SK-N-SH (cell line): ENCODE measurements at regions of chr3 and their contacts with region 1.

Region 1: DNA sequence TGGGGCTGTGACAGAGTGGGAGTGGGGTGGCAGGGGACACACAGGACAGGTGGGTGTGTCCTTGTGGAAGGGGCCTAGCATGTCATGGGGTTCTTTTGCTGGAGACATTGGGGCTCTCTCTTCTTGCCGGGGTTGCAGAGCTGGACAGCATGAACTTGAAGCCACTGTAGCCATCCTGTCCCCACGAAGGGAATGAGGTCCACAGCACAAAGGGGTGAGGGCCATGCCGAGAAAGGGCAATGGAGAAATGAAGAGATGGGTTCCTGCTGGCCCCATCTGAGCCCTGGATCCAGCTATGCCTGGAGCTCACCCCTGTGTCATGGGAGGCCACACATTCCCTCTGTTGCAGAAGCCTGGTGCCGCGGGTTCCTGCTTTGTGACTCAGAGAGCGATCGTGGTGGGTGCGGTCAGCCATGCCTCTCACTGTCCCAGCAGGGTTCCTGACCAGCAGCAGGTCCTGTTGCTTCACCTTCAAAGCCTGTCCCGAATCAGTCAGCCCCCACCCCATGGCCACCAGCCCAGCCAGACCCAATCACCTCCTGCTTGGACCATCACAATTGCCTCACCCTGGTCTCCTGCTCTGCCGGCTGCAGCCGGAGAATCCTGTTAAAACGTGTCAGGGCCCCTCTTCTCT is 50.0 kb downstream of the DNAJB8 start:
- DNase-seq: peak; percentile 55
- H3K4me3 ChIP-seq: no peak overlapping the region
- H3K27ac ChIP-seq: peak overlapping the region in 1 of 2 experiments; percentile 100; a peak in 3 of 4 replicates
- H3K4me1 ChIP-seq: peaks cover 0 to 81% of the 10 kb centered on the region in 2 experiments; a peak in 1 of 4 replicates
- H3K27me3 ChIP-seq: no peaks in the 10 kb centered on the region
- CTCF ChIP-seq: no peak
- EP300 ChIP-seq: no peak
- RAD21 ChIP-seq: no peak

Region 2: DNA sequence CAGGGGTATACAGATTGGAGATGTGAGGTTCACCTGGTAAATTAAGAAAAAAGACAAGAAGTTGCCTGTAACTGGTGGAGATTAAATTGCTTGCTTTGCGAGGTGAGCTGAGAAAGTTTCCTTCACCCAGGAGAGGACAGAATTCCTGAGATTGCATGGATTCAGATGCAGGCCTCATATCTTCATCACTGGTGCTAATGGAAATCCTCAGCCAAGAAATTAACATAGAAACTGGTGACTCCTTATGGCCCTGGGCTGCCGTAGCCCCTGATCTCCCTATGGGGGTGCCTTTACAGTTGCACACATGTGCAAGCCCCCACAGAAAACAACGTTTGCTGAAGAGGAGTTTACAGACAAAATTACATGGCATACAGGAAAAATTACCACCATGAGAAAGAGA is 195.4 kb before region 1 on chr3:
- CTCF ChIA-PET with region 1: no interaction called
- POLR2A ChIA-PET with region 1: no interaction called
- DNase-seq: no peak
- H3K4me3 ChIP-seq: no peak overlapping the region
- H3K27ac ChIP-seq: no peak overlapping the region; a peak in 1 of 4 replicates
- H3K4me1 ChIP-seq: peaks cover 10 to 40% of the 10 kb centered on the region in 2 experiments; a peak in 3 of 4 replicates
- H3K27me3 ChIP-seq: no peaks in the 10 kb centered on the region
- CTCF ChIP-seq: no peak
- EP300 ChIP-seq: no peak
- RAD21 ChIP-seq: no peak

Region 3: DNA sequence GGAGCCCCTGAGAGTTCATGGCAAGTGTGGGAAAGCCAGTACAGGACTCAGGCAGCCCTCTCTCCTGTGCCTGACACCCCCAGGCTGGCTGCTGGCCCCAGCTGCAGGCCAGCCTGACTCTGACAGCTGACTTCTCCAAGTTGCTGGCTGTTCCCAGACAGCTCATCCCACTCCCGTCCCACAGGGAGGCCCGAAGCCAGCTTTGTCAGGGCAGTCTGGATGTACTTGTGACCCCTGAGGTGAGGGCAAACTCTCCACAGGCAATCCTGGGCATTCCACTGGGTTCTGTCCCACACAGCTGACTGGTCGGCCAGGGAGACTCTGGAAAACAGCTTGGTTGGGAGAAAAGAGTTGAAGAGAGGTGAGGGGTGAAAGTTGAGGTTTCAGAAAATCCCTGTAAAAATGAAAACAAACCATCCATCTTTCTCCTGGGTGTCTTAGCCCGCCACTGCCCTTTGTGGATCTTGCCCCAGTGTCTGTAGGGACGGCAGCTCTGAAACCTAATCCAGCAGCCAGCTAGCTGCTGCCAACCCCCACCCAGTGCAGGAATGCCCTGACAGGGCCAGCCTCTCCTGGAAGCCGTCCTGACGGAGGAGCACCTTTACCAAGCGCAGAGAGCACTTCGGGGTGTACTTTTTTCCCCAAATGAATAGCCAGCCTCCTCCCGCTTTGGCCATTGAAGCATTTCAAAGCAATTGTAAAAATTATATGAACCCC is 37.9 kb before region 1 on chr3:
- CTCF ChIA-PET with region 1: no interaction called
- POLR2A ChIA-PET with region 1: no interaction called
- DNase-seq: no peak
- H3K4me3 ChIP-seq: no peak overlapping the region
- H3K27ac ChIP-seq: peak overlapping the region in 1 of 2 experiments; percentile 50; a peak in 2 of 4 replicates
- H3K4me1 ChIP-seq: peaks cover 9 to 46% of the 10 kb centered on the region in 2 experiments; a peak in 3 of 4 replicates
- H3K27me3 ChIP-seq: no peaks in the 10 kb centered on the region
- CTCF ChIP-seq: no peak
- EP300 ChIP-seq: no peak
- RAD21 ChIP-seq: no peak

Region 4: DNA sequence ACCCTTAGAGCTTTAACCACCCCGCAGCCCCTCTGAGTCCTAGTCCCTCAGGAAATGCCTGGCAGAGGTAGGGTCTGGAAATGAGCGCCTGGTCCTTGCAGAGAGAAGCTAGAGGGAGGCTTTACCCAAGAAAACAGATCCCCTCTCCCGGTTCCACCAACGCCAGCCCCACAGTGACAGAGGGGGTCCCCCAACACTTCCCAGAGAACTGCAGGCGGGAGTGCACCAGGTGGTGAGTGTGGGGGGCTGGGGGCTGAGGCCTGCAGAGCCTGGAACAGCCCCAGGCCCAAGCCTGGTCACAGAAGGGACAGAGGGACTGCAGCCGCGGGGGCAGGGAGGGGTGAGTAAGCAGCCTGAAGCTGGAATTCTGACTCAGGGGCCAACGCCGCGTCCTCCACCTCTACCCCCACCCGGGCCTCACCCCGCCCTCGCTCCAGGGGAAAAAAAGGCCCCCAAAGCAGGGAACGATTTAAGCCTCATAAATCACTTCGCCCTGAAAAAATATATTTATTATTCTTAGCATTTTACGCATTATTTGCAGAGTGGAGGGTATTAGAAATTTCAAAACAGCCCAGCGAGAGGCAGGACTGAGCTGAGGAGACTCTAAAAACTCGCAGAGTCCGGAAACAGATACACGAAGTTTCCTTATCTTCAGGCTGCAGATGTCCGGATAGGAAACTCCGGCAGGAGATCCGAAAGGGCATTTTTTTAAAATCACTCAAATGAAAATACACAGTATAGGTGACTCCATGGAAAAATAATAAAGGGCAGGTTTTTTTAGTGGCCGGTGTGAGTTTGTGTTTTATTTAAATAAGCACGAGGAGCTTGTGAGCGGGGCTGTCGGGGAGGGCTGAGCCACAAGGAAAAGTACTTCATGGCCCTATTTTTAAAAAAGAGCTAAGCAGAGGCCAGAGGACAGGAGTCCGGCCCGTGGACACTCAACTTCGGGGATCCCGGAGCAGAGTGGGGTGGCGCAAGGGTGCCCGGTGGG is 66.3 kb after region 1 on chr3:
- CTCF ChIA-PET with region 1: interaction called, 177 read pairs
- POLR2A ChIA-PET with region 1: interaction called, 100 read pairs
- DNase-seq: peak; percentile 63
- H3K4me3 ChIP-seq: peak overlapping the region; percentile 12 to 75
- H3K27ac ChIP-seq: peak overlapping the region; percentile 51 to 97
- H3K4me1 ChIP-seq: peaks cover 8 to 43% of the 10 kb centered on the region in 2 experiments
- H3K27me3 ChIP-seq: no peaks in the 10 kb centered on the region
- CTCF ChIP-seq: peak; percentile 38
- EP300 ChIP-seq: peak in 1 of 2 experiments; percentile 35; a peak in 1 of 4 replicates
- RAD21 ChIP-seq: no peak

Region 5: GRCh38 chr3:128487813-128488635 is 71.3 kb after region 1 on chr3:
- CTCF ChIA-PET with region 1: interaction called, 177 read pairs
- POLR2A ChIA-PET with region 1: interaction called, 100 read pairs
- DNase-seq: peak; percentile 82
- H3K4me3 ChIP-seq: peak overlapping the region; percentile 75 to 77
- H3K27ac ChIP-seq: peak overlapping the region; percentile 36 to 97
- H3K4me1 ChIP-seq: peaks cover 4 to 8% of the 10 kb centered on the region in 2 experiments; a peak in 3 of 4 replicates
- H3K27me3 ChIP-seq: peaks cover 23% of the 10 kb centered on the region; the same call in 1 of the 2 replicates
- CTCF ChIP-seq: no peak
- EP300 ChIP-seq: no peak
- RAD21 ChIP-seq: no peak